ENCODE measurements at regions of chr12 and their contacts with region 1.

Region 1: DNA sequence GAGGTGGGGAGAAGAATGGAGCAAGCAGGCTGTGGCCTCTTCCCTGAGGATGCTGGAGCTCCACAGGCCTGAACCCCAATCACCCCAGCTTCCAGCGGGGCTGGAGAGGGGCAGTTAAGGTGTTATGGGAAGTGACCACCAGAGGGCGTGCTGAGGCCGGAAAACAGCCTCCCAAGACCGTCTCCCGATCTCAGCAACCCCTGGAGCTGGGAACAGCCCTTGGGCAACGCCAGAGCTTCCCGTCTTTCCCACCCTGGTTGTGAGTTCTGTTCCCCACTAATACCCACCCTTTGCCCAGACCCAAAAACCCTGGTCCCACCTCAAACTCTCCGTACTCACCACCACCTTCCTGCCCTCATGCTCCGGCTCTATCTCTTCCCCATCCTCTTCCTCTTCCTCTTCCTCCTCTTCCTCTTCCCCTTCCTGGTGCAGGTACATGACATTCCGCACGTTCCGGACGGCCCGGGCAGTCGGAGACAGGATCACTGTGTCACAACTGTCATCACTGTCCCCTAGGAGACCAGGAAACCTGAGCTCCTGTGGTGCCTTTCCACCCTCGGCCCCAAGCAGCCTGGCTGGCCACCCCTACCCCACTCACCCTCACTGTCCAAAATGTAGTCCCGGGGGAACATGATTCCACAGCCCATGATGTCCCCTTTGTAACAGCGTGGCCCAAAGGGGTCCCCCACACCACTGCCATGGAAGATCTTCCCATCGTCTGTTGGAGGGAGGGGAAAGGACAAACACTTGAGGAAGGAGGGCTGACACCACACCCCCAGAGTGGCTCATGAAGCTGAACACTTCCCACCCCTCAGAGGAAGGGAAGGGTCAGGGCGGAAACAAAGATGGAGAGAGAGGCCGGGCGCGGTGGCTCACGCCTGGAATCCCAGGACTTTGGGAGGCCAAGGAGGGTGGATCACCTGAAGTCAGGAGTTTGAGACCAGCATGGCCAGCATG is 12.9 kb downstream of the SPRYD3 start:
- DNase-seq: peak; percentile 80 to 92
- H3K4me3 ChIP-seq: no peak overlapping the region
- H3K27ac ChIP-seq: peak overlapping the region; percentile 93 to 99
- H3K4me1 ChIP-seq: peaks cover 4 to 98% (median 86%) of the 10 kb centered on the region in 4 donors
- H3K27me3 ChIP-seq: no peaks in the 10 kb centered on the region
- CTCF ChIP-seq: peak; percentile 88 to 97

Region 2: GRCh38 chr12:53014709-53015108 is 51.5 kb before region 1 on chr12:
- intact Hi-C with region 1: no loop called
- DNase-seq: no peak
- H3K4me3 ChIP-seq: no peak overlapping the region
- H3K27ac ChIP-seq: no peak overlapping the region
- H3K4me1 ChIP-seq: peaks cover 0 to 36% (median 9%) of the 10 kb centered on the region in 4 donors
- H3K27me3 ChIP-seq: no peaks in the 10 kb centered on the region
- CTCF ChIP-seq: no peak

Region 3: GRCh38 chr12:53098982-53099651 is 32.9 kb after region 1 on chr12:
- intact Hi-C with region 1: loop called (anchors 2 kb)
- DNase-seq: peak; percentile 96
- H3K4me3 ChIP-seq: peak overlapping the region; percentile 80 to 83
- H3K27ac ChIP-seq: peak overlapping the region; percentile 94 to 97
- H3K4me1 ChIP-seq: peaks cover 0 to 50% (median 25%) of the 10 kb centered on the region in 4 donors
- H3K27me3 ChIP-seq: no peaks in the 10 kb centered on the region
- CTCF ChIP-seq: peak; percentile 93 to 96

Region 4: GRCh38 chr12:53198486-53199110 is 132.3 kb after region 1 on chr12:
- intact Hi-C with region 1: loop called (anchors 5 kb)
- DNase-seq: no peak
- H3K4me3 ChIP-seq: no peak overlapping the region
- H3K27ac ChIP-seq: no peak overlapping the region
- H3K4me1 ChIP-seq: peaks cover 0 to 12% (median 10%) of the 10 kb centered on the region in 4 donors
- H3K27me3 ChIP-seq: no peaks in the 10 kb centered on the region
- CTCF ChIP-seq: no peak

Measured in tibial artery (tissue), 4 donors.